ENCODE measurements at regions of chr19 and their contacts with region 1.

Region 1: GRCh38 chr19:32580901-32581703 is at the start of gene PDCD5:
- DNase-seq: peak; percentile 97
- H3K4me3 Mint-ChIP-seq: peak within 1 kb of the TSS; percentile 89
- H3K27ac Mint-ChIP-seq: peak within 1 kb of the TSS; percentile 81
- H3K4me1 Mint-ChIP-seq: peaks cover 39% of the 10 kb centered on the region
- H3K27me3 Mint-ChIP-seq: no peaks in the 10 kb centered on the region
- total RNA-seq, gene PDCD5: 233 to 242 TPM

Region 2: DNA sequence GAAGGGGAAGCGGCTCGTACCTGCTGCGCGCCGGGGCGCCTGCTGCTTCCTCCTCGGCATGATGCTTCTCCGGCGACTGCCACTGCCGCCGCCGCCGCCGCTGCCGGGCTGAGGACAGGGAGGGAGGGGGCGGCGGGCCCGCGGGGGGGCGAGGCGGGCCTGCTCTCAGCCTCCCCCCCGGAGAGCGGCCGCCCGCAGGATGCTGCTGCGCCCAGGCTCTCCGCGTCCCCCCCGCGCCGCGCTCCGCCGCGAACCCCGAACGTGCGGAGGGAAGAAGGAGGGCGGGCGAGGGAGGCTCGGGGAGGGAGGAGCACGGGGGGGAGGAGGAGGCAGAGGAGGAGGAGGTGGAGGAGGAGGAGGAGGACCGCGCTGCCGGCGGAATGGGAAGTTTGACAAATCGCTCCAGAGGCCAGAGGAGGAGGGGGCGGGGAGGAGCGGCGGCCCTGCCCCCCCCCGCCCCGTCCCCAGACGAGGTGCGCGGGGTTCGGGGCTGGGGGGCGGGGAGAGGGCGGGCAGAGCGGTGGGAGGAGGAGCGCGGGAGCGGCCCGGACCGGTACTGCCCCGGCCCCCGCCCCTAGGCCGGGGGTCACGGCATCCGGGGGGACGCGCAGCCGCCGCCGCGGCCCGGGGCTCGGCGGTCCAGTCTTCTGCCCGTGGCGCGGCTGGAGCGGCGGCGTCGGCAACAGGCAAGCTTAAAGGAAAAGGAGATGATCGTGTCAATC is 1231.8 kb before region 1 on chr19 and contains the start of gene TSHZ3:
- CTCF ChIA-PET with region 1: no interaction called
- intact Hi-C with region 1: loop called (anchors 2 kb)
- DNase-seq: peak; percentile 67
- H3K4me3 Mint-ChIP-seq: peak within 1 kb of the TSS; percentile 76
- H3K27ac Mint-ChIP-seq: no peak within 1 kb of the TSS
- H3K4me1 Mint-ChIP-seq: peaks cover 28% of the 10 kb centered on the region
- H3K27me3 Mint-ChIP-seq: peaks cover 47% of the 10 kb centered on the region
- total RNA-seq, gene TSHZ3: 1.6 to 2.0 TPM

Region 3: DNA sequence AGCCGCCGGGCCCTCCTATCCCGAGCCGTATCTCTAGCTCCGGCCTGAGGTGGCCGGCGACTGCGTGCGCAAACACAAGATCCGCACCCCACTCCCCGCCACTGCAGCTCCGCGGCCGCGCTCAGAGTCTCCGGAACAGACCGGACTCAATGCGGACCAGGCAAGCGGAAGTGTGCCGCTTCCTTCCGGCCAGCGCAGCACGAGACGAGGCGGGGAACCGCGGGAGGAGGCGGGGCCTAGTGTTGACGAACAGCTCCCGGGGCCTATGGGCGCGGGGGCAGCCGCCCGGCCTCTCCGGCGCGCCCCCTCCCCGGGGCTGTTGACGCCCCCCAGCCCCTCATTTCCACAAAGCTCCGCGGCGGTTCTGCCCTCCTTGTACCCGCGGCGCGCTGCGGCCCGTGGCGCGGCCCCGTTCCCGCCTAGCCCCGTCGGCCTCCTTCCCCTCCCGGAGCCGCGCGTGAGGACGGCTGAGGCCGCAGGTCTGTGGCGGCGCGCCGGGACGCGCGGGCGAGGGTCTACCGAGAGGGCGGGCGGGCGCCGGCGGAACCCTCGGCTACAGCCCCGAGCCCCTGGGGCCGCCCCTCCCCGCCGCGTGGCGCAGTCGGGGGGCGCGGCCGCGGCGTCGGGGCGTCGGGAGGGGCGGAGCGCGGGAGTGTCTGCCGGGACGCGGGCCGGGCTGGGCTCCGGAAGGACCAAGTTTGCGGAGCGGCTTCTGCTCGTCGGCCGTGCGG is 175.5 kb before region 1 on chr19 and contains the start of gene DPY19L3:
- CTCF ChIA-PET with region 1: no interaction called
- intact Hi-C with region 1: loop called (anchors 1 kb)
- DNase-seq: peak; percentile 93
- H3K4me3 Mint-ChIP-seq: peak within 1 kb of the TSS; percentile 88
- H3K27ac Mint-ChIP-seq: peak within 1 kb of the TSS; percentile 90
- H3K4me1 Mint-ChIP-seq: peaks cover 19% of the 10 kb centered on the region
- H3K27me3 Mint-ChIP-seq: no peaks in the 10 kb centered on the region
- total RNA-seq, gene DPY19L3: 11.1 to 11.5 TPM

Region 4: GRCh38 chr19:32624410-32624809 is 43.3 kb after region 1 on chr19:
- CTCF ChIA-PET with region 1: no interaction called
- intact Hi-C with region 1: no loop called
- DNase-seq: no peak
- H3K4me3 Mint-ChIP-seq: no peak overlapping the region
- H3K27ac Mint-ChIP-seq: no peak overlapping the region
- H3K4me1 Mint-ChIP-seq: no peaks in the 10 kb centered on the region
- H3K27me3 Mint-ChIP-seq: no peaks in the 10 kb centered on the region

Region 5: GRCh38 chr19:32674959-32675719 is 94.0 kb after region 1 on chr19 and contains the start of gene ANKRD27:
- CTCF ChIA-PET with region 1: no interaction called
- intact Hi-C with region 1: loop called (anchors 1 kb)
- DNase-seq: peak; percentile 97
- H3K4me3 Mint-ChIP-seq: peak within 1 kb of the TSS; percentile 89
- H3K27ac Mint-ChIP-seq: peak within 1 kb of the TSS; percentile 46
- H3K4me1 Mint-ChIP-seq: peaks cover 22% of the 10 kb centered on the region
- H3K27me3 Mint-ChIP-seq: peaks cover 14% of the 10 kb centered on the region
- total RNA-seq, gene ANKRD27: 28.8 to 29.7 TPM

Region 6: GRCh38 chr19:32748497-32748896 is 167.4 kb after region 1 on chr19:
- CTCF ChIA-PET with region 1: no interaction called
- intact Hi-C with region 1: no loop called
- DNase-seq: no peak
- H3K4me3 Mint-ChIP-seq: no peak overlapping the region
- H3K27ac Mint-ChIP-seq: no peak overlapping the region
- H3K4me1 Mint-ChIP-seq: peaks cover 14% of the 10 kb centered on the region
- H3K27me3 Mint-ChIP-seq: peaks cover 16% of the 10 kb centered on the region

Region 7: GRCh38 chr19:33052352-33052972 is 471.4 kb after region 1 on chr19:
- CTCF ChIA-PET with region 1: no interaction called
- intact Hi-C with region 1: no loop called
- DNase-seq: no peak
- H3K4me3 Mint-ChIP-seq: no peak overlapping the region
- H3K27ac Mint-ChIP-seq: no peak overlapping the region
- H3K4me1 Mint-ChIP-seq: no peaks in the 10 kb centered on the region
- H3K27me3 Mint-ChIP-seq: peaks cover 2% of the 10 kb centered on the region

Region 8: GRCh38 chr19:33080761-33081681 is 499.9 kb after region 1 on chr19 and contains the start of gene GPATCH1:
- CTCF ChIA-PET with region 1: no interaction called
- intact Hi-C with region 1: loop called (anchors 10 kb)
- DNase-seq: peak; percentile 89
- H3K4me3 Mint-ChIP-seq: peak within 1 kb of the TSS; percentile 99
- H3K27ac Mint-ChIP-seq: peak within 1 kb of the TSS; percentile 88
- H3K4me1 Mint-ChIP-seq: peaks cover 25% of the 10 kb centered on the region
- H3K27me3 Mint-ChIP-seq: no peaks in the 10 kb centered on the region
- total RNA-seq, gene GPATCH1: 8.3 to 9.1 TPM

Measured in activated naive CD4-positive, alpha-beta T cell treated with anti-CD3 and anti-CD28 coated beads for 36 hours (primary cell).